ENCODE measurements at regions of chr19 and their contacts with region 1.

Region 1: DNA sequence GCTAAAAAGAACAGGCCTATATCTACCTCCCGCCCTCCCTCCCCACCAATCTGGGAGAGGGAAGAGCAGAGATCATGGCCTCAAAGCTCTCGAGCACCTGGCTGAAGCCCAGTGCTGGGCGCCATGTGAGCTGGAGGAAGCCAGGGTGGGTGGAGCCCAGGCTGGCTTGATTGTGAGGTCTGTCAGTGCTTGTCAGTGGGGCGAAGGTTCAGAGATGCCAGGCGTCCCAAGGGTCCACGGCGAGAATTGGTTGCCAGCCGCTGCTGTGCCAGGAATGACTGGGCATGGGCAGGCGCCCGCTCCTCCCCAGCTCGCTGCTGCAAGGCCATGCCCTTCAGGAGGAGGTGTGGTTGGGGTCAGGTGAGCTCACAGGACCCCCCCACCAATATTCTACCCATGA is 11.5 kb downstream of the BEST2 start:
- DNase-seq: no peak
- H3K4me3 Mint-ChIP-seq: no peak overlapping the region
- H3K27ac Mint-ChIP-seq: no peak overlapping the region
- H3K4me1 Mint-ChIP-seq: no peaks in the 10 kb centered on the region
- H3K27me3 Mint-ChIP-seq: no peaks in the 10 kb centered on the region
- CTCF ChIP-seq: no peak

Region 2: DNA sequence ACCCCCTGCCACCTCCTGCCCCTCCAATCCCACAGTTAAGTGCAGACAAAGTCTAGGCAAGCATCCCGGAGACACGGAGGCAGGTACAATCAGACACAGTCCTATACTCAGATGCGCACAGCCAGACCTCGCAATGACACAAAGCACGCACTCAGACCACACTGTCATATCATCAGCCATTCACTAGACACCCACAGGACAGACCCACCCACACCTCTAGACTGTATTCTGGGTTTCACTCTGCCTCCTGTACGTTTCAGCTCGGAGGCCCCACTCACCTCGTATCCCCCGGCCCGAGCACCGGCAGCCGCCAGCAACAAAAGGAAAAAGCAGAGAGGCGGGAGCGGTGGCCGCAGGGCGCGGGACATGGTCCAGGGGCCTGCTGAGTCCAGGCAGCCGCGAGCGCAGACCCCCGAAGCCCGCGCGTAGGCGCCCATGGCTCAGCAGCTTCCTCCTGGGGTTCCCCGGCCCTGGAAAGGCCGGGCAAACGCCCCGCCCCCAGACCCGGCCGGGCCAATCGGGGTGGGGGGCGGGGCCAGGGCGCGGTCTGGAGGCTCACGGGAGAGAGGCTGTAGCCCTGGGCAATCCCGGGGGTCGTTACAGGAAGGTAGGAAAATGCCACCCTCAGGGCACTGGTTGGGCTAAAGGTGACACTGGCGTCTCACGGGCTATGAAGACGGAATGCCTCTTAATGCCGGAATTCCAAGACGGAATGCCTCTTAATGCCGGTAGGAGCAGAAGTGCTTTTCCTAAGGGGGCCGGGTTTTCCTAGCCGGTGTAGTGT is 96.6 kb before region 1 on chr19 and contains the starts of genes MAN2B1 and WDR83:
- CTCF ChIA-PET with region 1: no interaction called
- intact Hi-C with region 1: no loop called
- DNase-seq: peak; percentile 74
- H3K4me3 Mint-ChIP-seq: peak within 1 kb of the TSS; percentile 88
- H3K27ac Mint-ChIP-seq: peak within 1 kb of the TSS; percentile 77
- H3K4me1 Mint-ChIP-seq: no peaks in the 10 kb centered on the region
- H3K27me3 Mint-ChIP-seq: no peaks in the 10 kb centered on the region
- CTCF ChIP-seq: no peak
- total RNA-seq, gene MAN2B1: 76.9 and 84.4 TPM in 2 replicates
- total RNA-seq, gene WDR83: 10.1 and 10.8 TPM in 2 replicates

Region 3: DNA sequence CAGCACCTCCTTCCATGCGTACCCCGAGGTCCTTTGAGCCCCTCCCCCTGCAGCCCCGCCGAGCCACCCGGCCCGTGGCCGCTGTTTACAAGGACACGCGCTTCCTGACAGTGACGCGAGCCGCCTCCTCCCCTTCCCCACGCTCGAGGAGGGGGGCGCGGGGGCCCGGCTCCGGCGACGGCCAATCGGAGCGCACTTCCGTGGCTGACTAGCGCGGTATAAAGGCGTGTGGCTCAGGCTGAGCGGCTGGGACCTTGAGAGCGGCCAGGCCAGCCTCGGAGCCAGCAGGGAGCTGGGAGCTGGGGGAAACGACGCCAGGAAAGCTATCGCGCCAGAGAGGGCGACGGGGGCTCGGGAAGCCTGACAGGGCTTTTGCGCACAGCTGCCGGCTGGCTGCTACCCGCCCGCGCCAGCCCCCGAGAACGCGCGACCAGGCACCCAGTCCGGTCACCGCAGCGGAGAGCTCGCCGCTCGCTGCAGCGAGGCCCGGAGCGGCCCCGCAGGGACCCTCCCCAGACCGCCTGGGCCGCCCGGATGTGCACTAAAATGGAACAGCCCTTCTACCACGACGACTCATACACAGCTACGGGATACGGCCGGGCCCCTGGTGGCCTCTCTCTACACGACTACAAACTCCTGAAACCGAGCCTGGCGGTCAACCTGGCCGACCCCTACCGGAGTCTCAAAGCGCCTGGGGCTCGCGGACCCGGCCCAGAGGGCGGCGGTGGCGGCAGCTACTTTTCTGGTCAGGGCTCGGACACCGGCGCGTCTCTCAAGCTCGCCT is 28.3 kb after region 1 on chr19 and contains the start of gene JUNB:
- CTCF ChIA-PET with region 1: interaction called, 15 read pairs
- intact Hi-C with region 1: loop called (anchors 1 kb)
- DNase-seq: peak; percentile 95
- H3K4me3 Mint-ChIP-seq: peak within 1 kb of the TSS; percentile 86
- H3K27ac Mint-ChIP-seq: peak within 1 kb of the TSS; percentile 98
- H3K4me1 Mint-ChIP-seq: peaks cover 35% of the 10 kb centered on the region
- H3K27me3 Mint-ChIP-seq: no peaks in the 10 kb centered on the region
- CTCF ChIP-seq: no peak
- total RNA-seq, gene JUNB: 113 and 116 TPM in 2 replicates

Region 4: GRCh38 chr19:12847159-12848139 is 84.3 kb after region 1 on chr19:
- CTCF ChIA-PET with region 1: interaction called, 11 read pairs
- intact Hi-C with region 1: loop called (anchors 5 kb)
- DNase-seq: peak; percentile 94
- H3K4me3 Mint-ChIP-seq: peak overlapping the region; percentile 60
- H3K27ac Mint-ChIP-seq: no peak overlapping the region
- H3K4me1 Mint-ChIP-seq: no peaks in the 10 kb centered on the region
- H3K27me3 Mint-ChIP-seq: peaks cover 2% of the 10 kb centered on the region
- CTCF ChIP-seq: peak; percentile 92

Region 5: GRCh38 chr19:12983542-12984142 is 220.5 kb after region 1 on chr19:
- CTCF ChIA-PET with region 1: no interaction called
- intact Hi-C with region 1: no loop called
- DNase-seq: peak; percentile 82
- H3K4me3 Mint-ChIP-seq: no peak overlapping the region
- H3K27ac Mint-ChIP-seq: no peak overlapping the region
- H3K4me1 Mint-ChIP-seq: no peaks in the 10 kb centered on the region
- H3K27me3 Mint-ChIP-seq: no peaks in the 10 kb centered on the region
- CTCF ChIP-seq: peak; percentile 85